ENCODE measurements at regions of chr19 and their contacts with region 1.

Region 1: DNA sequence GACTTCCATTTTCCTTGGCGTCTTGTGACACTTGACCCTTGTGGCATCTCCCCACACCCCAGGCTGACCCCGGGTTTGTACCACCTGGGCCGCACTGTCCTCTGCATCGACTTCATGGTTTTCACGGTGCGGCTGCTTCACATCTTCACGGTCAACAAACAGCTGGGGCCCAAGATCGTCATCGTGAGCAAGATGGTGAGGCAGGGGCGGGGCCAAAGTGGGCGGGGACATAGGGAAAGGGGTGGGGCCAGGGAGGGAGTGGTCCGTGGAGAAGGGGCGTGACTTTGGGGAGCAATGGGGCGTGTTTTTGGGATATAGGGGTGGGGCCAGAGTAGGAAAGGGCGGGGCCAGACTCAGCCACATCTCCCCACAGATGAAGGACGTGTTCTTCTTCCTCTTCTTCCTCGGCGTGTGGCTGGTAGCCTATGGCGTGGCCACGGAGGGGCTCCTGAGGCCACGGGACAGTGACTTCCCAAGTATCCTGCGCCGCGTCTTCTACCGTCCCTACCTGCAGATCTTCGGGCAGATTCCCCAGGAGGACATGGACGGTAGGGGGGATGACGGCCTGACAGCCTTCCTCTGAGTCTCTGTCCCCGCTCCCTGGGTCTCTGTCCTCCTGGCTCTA is 42.8 kb downstream of the TRPM4 start:
- DNase-seq: no peak
- H3K4me3 ChIP-seq: no peak overlapping the region
- H3K27ac ChIP-seq: no peak overlapping the region
- H3K4me1 ChIP-seq: no peaks in the 10 kb centered on the region
- H3K27me3 ChIP-seq: no peaks in the 10 kb centered on the region
- CTCF ChIP-seq: no peak
- EP300 ChIP-seq: no peak
- POLR2A ChIP-seq: no peak
- RAD21 ChIP-seq: no peak

Region 2: DNA sequence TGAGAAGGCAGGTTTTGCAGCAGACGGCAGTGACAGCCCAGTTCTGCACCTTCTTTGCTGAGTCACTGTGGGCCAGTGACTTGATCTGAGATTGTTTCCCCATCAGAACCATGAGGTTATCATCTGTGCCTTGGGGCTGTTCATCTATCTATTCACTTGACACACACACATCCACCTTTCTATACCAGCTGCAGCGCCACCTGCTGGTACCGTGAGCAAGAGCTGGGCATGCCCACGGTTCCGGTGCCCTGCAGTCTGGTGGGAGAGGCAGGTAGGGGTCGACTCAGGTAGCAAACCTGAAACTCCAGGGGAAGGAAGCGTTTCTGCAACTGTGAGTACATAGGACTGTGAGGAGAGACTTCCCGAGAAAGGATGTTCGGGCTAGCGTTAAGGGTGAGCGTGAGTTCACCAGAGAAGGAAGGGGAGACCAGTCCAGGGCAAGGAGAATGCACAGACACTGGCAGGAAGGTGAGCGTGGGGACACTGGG is 93.7 kb before region 1 on chr19:
- CTCF ChIA-PET with region 1: interaction called, 19 read pairs
- POLR2A ChIA-PET with region 1: no interaction called
- DNase-seq: peak in 1 of 2 experiments; percentile 87
- H3K4me3 ChIP-seq: no peak overlapping the region
- H3K27ac ChIP-seq: no peak overlapping the region
- H3K4me1 ChIP-seq: no peaks in the 10 kb centered on the region
- H3K27me3 ChIP-seq: no peaks in the 10 kb centered on the region
- CTCF ChIP-seq: peak; percentile 76 to 98 (median 97)
- EP300 ChIP-seq: no peak
- POLR2A ChIP-seq: no peak
- RAD21 ChIP-seq: peak; percentile 29 to 60; a peak in 3 of 4 replicates

Region 3: DNA sequence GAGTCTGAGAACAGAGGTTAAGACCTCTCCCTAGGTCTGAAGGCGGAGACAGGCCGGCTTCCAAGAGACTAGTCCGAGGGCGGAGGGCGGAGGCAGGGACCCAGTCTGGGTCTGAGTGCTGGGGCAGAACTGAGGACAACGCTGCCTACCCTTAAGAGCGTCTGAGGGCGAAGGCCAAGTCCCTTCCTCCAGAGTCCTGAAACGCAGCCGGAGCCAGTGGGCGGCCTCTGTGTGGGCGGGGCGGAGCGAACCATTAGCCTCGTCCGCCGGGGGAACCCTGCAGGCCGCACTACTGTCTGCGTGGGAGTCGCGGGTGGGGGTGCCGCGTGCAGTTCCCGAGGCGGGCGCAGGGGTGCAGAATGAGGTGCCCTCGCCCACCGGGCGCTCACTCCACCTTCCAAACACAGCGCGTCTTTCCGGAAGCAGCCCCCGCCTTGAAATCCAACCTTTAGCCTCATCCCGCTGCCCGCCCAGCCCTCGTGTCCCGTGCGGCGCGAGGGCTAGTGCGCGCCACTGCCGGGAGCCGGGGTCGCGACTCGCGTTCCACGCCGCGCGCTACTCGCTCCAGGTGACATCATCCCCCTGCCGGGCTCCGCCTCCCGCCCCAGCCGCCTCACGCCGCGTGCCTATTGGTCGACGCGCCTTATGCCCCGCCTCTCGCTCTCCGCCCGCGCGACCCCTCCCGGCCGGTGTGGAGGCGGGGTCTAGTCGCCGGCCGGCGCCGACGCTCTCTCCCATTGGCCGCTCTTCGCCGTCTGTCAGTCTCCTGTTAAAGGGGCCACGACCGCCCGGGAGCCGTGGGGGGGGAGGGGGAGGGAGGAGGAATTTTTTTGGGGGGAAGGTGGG is 81.6 kb before region 1 on chr19 and contains the start of gene C19orf73:
- CTCF ChIA-PET with region 1: interaction called, 16 read pairs
- POLR2A ChIA-PET with region 1: interaction called, 3 read pairs
- DNase-seq: peak in 1 of 2 experiments; percentile 94
- H3K4me3 ChIP-seq: peak within 1 kb of the TSS; percentile 64 to 86 (median 78)
- H3K27ac ChIP-seq: peak within 1 kb of the TSS; percentile 57; the same call in 1 of the 2 replicates
- H3K4me1 ChIP-seq: peaks cover 0 to 5% (median 4%) of the 10 kb centered on the region in 4 experiments; a peak in 4 of 7 replicates
- H3K27me3 ChIP-seq: peaks cover 8 to 19% (median 17%) of the 10 kb centered on the region in 4 experiments
- CTCF ChIP-seq: peak in 1 of 3 experiments; percentile 5; a peak in 1 of 4 replicates
- EP300 ChIP-seq: peak in 1 of 2 experiments; percentile 76; a peak in 1 of 3 replicates
- POLR2A ChIP-seq: peak in 1 of 2 experiments; percentile 24; a peak in 1 of 3 replicates
- RAD21 ChIP-seq: no peak; a peak in 1 of 4 replicates
- total RNA-seq, gene C19orf73: 1.2 and 2.5 TPM in 2 replicates

Region 4: DNA sequence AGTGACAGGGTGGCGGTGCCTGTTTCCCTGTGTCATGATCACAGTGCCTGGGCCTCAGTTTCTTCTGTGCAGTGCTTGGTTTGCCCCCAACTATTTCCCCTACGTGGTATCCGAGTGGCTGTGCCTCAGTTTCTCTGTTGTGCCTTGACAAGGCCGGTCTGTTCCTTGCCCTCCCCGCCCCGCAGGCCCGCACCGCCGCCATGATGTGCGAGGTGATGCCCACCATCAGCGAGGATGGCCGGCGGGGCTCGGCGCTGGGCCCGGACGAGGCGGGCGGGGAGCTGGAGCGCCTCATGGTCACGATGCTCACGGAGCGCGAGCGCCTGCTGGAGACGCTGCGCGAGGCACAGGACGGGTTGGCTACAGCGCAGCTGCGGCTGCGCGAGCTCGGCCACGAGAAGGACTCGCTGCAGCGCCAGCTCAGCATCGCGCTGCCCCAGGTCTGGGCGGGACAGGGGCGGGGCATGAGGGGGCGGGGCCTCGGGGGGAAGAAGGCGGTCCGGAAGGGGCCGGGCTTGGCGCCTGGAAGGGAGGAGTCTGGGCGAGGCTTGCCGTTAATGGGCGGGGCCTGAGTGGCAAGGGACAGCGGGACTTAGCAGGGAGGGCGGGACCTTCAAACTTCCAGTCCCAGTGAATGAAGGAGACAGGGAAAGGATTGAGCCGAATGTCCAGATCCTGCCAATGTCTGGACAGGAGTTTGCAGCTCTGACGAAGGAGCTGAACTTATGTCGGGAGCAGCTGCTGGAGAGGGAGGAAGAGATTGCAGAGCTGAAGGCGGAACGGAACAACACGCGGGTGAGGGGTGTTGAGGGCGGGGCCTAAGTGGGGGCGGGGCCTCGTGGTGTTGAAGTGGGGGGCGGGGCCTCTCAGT is 72.4 kb before region 1 on chr19:
- CTCF ChIA-PET with region 1: interaction called, 11 read pairs
- POLR2A ChIA-PET with region 1: interaction called, 3 read pairs
- DNase-seq: peak in 1 of 2 experiments; percentile 97
- H3K4me3 ChIP-seq: peak overlapping the region; percentile 56 to 74 (median 66)
- H3K27ac ChIP-seq: peak overlapping the region; percentile 48; the same call in 1 of the 2 replicates
- H3K4me1 ChIP-seq: peaks cover 4 to 19% (median 8%) of the 10 kb centered on the region in 4 experiments
- H3K27me3 ChIP-seq: no peaks in the 10 kb centered on the region; a peak in 2 of 7 replicates
- CTCF ChIP-seq: peak in 1 of 3 experiments; percentile 1; a peak in 1 of 4 replicates
- EP300 ChIP-seq: no peak
- POLR2A ChIP-seq: peak in 1 of 2 experiments; percentile 69; a peak in 2 of 3 replicates
- RAD21 ChIP-seq: no peak

Region 5: GRCh38 chr19:49148784-49149651 is 51.3 kb before region 1 on chr19:
- CTCF ChIA-PET with region 1: interaction called, 25 read pairs
- POLR2A ChIA-PET with region 1: interaction called, 10 read pairs
- DNase-seq: peak in 1 of 2 experiments; percentile 100
- H3K4me3 ChIP-seq: peak overlapping the region; percentile 69 to 97 (median 90)
- H3K27ac ChIP-seq: peak overlapping the region; percentile 65; the same call in 1 of the 2 replicates
- H3K4me1 ChIP-seq: peaks cover 0 to 22% (median 9%) of the 10 kb centered on the region in 4 experiments; a peak in 6 of 7 replicates
- H3K27me3 ChIP-seq: peaks cover 0 to 5% (median 2%) of the 10 kb centered on the region in 4 experiments; a peak in 2 of 7 replicates
- CTCF ChIP-seq: no peak
- EP300 ChIP-seq: peak in 1 of 2 experiments; percentile 95; a peak in 1 of 3 replicates
- POLR2A ChIP-seq: no peak; a peak in 2 of 3 replicates
- RAD21 ChIP-seq: no peak

Region 6: DNA sequence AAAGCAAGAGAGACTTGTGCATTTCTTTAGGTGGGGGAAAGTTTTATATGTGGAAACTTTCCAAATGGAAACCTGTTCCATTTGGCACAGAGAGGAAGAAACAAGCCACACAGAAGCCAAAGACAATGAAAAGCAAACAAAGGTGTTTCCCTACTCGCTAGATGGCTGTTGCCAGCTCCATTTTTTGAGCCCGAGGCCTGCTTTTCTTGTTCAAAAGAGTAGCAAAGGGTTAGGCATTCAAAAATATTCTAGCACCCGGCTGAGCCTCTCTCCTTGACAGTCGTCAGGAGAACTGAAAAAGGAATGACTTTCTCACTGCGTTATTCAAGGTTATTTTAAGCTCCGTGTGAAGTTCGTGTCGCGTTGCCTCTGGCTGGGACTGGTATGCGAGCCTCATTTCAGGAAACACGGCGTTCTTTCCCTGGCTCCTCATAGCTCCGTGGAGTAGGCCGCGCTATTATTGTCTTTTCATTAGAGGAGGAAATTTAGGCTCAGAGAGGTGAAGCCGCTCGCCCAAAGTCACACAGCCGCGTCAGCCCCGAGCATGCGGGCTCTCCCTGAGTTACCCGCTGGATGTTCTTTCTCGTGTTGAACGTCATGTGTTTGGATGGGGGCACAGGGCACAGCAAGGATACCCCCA is 35.1 kb before region 1 on chr19:
- CTCF ChIA-PET with region 1: interaction called, 19 read pairs
- POLR2A ChIA-PET with region 1: no interaction called
- DNase-seq: no peak
- H3K4me3 ChIP-seq: peak overlapping the region in 3 of 4 experiments; percentile 42 to 62 (median 45); a peak in 5 of 8 replicates
- H3K27ac ChIP-seq: no peak overlapping the region
- H3K4me1 ChIP-seq: peaks cover 0 to 12% (median 8%) of the 10 kb centered on the region in 4 experiments; a peak in 6 of 7 replicates
- H3K27me3 ChIP-seq: peaks cover 0 to 5% (median 2%) of the 10 kb centered on the region in 4 experiments; a peak in 3 of 7 replicates
- CTCF ChIP-seq: no peak
- EP300 ChIP-seq: no peak
- POLR2A ChIP-seq: no peak
- RAD21 ChIP-seq: no peak

Region 7: DNA sequence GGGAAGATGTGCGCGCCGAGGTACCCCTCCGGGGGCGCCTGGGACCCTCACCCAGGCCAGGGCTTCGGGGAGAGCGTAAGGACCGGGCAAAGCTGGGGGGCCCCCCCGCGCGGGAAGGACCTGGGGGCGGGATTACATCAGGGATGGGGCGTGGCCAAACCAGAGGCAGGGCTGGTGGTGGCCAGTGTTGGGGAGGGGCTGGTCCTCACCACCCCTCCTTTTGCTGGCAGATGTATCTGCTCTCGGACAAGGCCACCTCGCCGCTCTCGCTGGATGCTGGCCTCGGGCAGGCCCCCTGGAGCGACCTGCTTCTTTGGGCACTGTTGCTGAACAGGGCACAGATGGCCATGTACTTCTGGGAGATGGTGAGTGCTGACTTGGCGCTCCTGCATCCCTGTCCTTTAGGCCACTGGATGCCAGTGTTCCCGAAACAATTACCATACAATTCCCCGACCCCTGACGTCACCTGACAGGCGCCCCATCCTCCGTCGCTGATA is 17.5 kb before region 1 on chr19:
- CTCF ChIA-PET with region 1: interaction called, 66 read pairs
- POLR2A ChIA-PET with region 1: interaction called, 6 read pairs
- DNase-seq: no peak
- H3K4me3 ChIP-seq: no peak overlapping the region
- H3K27ac ChIP-seq: no peak overlapping the region
- H3K4me1 ChIP-seq: 0 out of 7 replicates have a peak, but pooled peaks cover 0 to 2% (median 0%) of the 10 kb centered on the region in 4 experiments
- H3K27me3 ChIP-seq: no peaks in the 10 kb centered on the region; a peak in 1 of 7 replicates
- CTCF ChIP-seq: no peak
- EP300 ChIP-seq: no peak
- POLR2A ChIP-seq: no peak
- RAD21 ChIP-seq: no peak

Measured in H1 (cell line).